Naive thymus-derived CD4-positive, alpha-beta T cell (primary cell): ENCODE measurements at regions of chr2 and their contacts with region 1.

Region 1: DNA sequence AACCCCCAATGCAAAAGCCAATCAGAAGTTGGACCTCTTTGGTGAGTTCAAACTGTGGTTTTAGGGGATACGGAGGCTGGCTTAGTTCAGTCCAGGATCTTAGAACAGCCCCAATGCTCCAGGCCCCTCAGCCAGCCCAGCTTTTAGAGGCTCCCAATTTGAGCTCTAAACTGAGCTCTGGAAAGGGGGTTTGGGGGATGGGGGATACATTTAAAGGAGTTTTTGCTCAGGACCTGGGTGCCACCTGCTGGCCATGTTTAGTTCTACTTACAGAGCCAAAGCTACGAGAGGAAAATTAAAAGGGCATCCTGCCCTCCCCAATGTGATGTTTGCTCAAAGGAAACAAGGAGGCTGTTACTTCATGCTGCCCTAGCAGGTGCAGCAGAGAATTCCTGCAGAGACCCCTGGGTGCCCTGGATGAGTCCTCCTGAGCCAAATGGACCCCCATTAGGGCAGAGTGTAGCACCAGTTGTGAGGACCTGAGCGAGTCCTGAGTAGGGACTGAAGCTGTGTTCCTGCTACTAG is 15.9 kb upstream of the TMEM214 start:
- DNase-seq: peak in 7 of 9 donors; percentile 20 to 38 (median 27)
- ATAC-seq: peak; percentile 54
- H3K4me3 ChIP-seq: no peak overlapping the region
- H3K4me3 Mint-ChIP-seq: no peak overlapping the region
- H3K27ac ChIP-seq: no peak overlapping the region
- H3K27ac Mint-ChIP-seq: no peak overlapping the region
- H3K4me1 ChIP-seq: no peaks in the 10 kb centered on the region
- H3K4me1 Mint-ChIP-seq: peaks cover 0 to 7% (median 0%) of the 10 kb centered on the region in 7 donors
- H3K27me3 ChIP-seq: no peaks in the 10 kb centered on the region
- H3K27me3 Mint-ChIP-seq: no peaks in the 10 kb centered on the region

Region 2: DNA sequence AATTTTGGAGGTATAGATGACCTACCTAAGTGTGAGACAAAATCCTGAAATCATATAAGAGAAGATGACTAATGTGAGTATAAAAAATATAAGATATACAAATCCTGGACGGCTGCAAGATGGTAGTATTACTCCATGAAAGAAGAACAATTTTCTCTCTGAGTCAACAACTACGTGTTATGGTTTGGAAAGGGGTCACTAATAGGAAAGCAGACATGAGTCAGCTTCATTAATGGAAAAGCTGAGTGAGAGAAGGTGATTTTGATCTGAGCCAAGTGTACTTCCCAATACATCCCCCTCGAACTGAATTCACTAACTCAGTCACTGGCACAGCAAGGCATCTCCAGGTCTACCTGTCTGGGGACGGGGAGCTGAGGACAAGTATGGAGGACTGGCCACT is 691.0 kb before region 1 on chr2:
- CTCF ChIA-PET with region 1: no interaction called
- POLR2A ChIA-PET with region 1: no interaction called
- intact Hi-C with region 1: no loop called
- DNase-seq: no peak
- ATAC-seq: no peak
- H3K4me3 ChIP-seq: no peak overlapping the region
- H3K4me3 Mint-ChIP-seq: no peak overlapping the region
- H3K27ac ChIP-seq: no peak overlapping the region
- H3K27ac Mint-ChIP-seq: no peak overlapping the region
- H3K4me1 ChIP-seq: peaks cover 0 to 6% of the 10 kb centered on the region in 2 donors
- H3K4me1 Mint-ChIP-seq: peaks cover 3 to 19% (median 9%) of the 10 kb centered on the region in 7 donors
- H3K27me3 ChIP-seq: no peaks in the 10 kb centered on the region
- H3K27me3 Mint-ChIP-seq: peaks cover 0 to 5% (median 0%) of the 10 kb centered on the region in 5 donors

Region 3: DNA sequence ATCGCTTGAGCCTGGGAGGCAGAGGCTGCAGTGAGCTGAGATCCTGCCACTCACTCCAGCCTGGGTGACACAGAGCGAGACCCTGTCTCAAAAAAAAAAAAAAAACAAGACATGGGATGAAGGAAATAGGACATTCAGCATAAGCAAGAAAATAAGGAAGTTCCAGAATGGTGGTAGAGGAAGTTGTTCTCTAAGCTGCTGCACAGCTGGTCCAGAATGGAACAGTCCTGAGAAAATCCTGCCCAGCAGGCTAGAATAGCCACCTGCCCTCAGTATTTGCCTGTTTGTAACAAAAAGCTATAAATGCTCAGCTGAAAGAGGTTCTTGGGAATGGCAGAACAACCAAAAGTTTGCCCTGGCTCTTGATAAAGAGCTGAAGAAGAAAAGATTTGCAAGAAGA is 57.5 kb before region 1 on chr2:
- CTCF ChIA-PET with region 1: interaction called, 54 read pairs
- POLR2A ChIA-PET with region 1: no interaction called
- intact Hi-C with region 1: loop called (anchors 1 kb)
- DNase-seq: no peak
- ATAC-seq: no peak
- H3K4me3 ChIP-seq: no peak overlapping the region
- H3K4me3 Mint-ChIP-seq: no peak overlapping the region
- H3K27ac ChIP-seq: no peak overlapping the region
- H3K27ac Mint-ChIP-seq: peak overlapping the region in 1 of 9 donors; percentile 14
- H3K4me1 ChIP-seq: no peaks in the 10 kb centered on the region
- H3K4me1 Mint-ChIP-seq: peaks cover 0 to 8% (median 0%) of the 10 kb centered on the region in 7 donors
- H3K27me3 ChIP-seq: no peaks in the 10 kb centered on the region
- H3K27me3 Mint-ChIP-seq: peaks cover 9 to 52% (median 35%) of the 10 kb centered on the region in 5 donors

Region 4: DNA sequence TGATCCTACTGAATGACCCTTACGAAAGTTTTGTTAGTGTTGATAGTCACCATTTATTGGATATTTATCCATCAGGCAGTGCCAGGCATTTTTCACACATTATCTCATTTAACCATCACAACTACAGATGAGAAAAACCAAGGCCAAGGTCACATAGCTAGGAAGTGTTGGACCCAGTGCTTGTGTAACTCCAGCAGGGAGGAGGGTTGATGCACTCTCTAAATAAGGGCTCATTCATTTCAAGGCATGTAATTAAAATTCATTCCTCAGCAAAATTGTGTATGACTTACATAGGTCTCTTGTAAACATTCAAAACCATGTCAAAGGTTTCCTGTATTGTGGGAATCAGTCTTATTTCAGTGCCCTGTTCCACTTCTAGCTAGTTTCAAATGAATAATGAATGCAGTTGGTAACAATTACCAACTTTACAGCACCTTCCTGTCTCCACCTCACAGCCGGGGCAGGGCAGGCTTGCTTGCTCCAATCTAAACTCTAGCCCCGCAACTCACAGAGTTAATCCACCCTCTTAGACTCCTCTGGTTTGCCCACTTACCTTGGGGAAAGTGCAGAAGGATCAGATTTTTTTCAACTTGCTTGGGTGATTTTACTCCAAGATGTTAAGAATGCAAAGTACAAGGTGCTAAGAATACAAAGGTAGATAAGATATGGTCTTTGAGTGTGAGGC is 52.3 kb before region 1 on chr2:
- CTCF ChIA-PET with region 1: interaction called, 54 read pairs
- POLR2A ChIA-PET with region 1: no interaction called
- intact Hi-C with region 1: loop called (anchors 1 kb)
- DNase-seq: no peak
- ATAC-seq: no peak
- H3K4me3 ChIP-seq: no peak overlapping the region
- H3K4me3 Mint-ChIP-seq: no peak overlapping the region
- H3K27ac ChIP-seq: no peak overlapping the region
- H3K27ac Mint-ChIP-seq: no peak overlapping the region
- H3K4me1 ChIP-seq: no peaks in the 10 kb centered on the region
- H3K4me1 Mint-ChIP-seq: peaks cover 2 to 14% (median 11%) of the 10 kb centered on the region in 7 donors
- H3K27me3 ChIP-seq: no peaks in the 10 kb centered on the region
- H3K27me3 Mint-ChIP-seq: peaks cover 10 to 38% (median 32%) of the 10 kb centered on the region in 5 donors

Region 5: GRCh38 chr2:26970244-26970920 is 46.5 kb before region 1 on chr2 and contains the start of gene MAPRE3:
- CTCF ChIA-PET with region 1: interaction called, 12 read pairs
- POLR2A ChIA-PET with region 1: no interaction called
- intact Hi-C with region 1: no loop called
- DNase-seq: peak; percentile 71 to 93 (median 78)
- ATAC-seq: peak; percentile 93
- H3K4me3 ChIP-seq: peak within 1 kb of the TSS; percentile 89
- H3K4me3 Mint-ChIP-seq: peak within 1 kb of the TSS; percentile 83 to 97 (median 92)
- H3K27ac ChIP-seq: peak within 1 kb of the TSS; percentile 61
- H3K27ac Mint-ChIP-seq: peak within 1 kb of the TSS; percentile 56 to 96 (median 74)
- H3K4me1 ChIP-seq: peaks cover 0 to 12% of the 10 kb centered on the region in 2 donors
- H3K4me1 Mint-ChIP-seq: peaks cover 11 to 36% (median 25%) of the 10 kb centered on the region in 7 donors
- H3K27me3 ChIP-seq: no peaks in the 10 kb centered on the region
- H3K27me3 Mint-ChIP-seq: peaks cover 7 to 68% (median 13%) of the 10 kb centered on the region in 5 donors
- total RNA-seq, gene MAPRE3: 1.8 to 6.0 (median 4.5) TPM

Region 6: DNA sequence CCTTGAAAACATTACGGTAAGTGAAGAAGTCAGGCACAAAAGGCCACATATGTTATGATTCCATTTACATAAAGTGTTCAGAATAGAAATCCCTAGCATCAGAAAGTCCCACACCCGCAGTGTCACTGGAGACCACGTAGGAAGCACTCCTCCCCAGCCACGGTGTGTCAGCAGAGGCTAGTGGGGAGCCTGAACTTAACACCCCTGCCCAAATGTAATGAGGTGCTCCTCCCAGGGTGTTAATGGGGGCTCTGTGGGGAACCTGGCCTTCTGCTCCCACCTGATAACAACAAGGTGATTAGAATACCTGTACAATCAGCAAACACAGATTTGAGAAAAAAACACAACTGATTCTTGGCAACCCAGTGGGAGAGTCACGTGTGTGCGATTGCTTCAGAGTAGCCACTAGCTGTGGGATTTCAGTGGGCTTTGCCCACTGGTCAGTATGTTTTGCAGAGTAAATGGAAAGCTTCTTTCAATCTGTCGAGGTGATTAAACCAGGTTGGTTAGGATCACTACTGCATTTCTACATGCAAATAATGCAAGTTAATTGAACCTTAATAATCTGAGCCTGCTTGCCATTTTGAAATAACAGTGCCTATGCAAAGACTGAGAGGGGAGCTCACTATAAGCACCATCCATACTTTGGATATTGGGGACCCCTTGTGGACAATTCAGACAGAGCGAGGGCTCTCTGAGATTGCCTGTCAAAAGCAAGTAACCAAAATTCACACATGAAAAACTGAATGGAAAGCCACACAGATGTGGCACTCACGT is 174.4 kb after region 1 on chr2:
- CTCF ChIA-PET with region 1: no interaction called
- POLR2A ChIA-PET with region 1: no interaction called
- intact Hi-C with region 1: no loop called
- DNase-seq: peak in 7 of 9 donors; percentile 28 to 60 (median 51)
- ATAC-seq: peak; percentile 85
- H3K4me3 ChIP-seq: no peak overlapping the region
- H3K4me3 Mint-ChIP-seq: no peak overlapping the region
- H3K27ac ChIP-seq: no peak overlapping the region
- H3K27ac Mint-ChIP-seq: no peak overlapping the region
- H3K4me1 ChIP-seq: no peaks in the 10 kb centered on the region
- H3K4me1 Mint-ChIP-seq: peaks cover 0 to 2% (median 0%) of the 10 kb centered on the region in 7 donors
- H3K27me3 ChIP-seq: no peaks in the 10 kb centered on the region
- H3K27me3 Mint-ChIP-seq: peaks cover 0 to 15% (median 4%) of the 10 kb centered on the region in 5 donors